Activated T-helper 1 cell treated with anti-CD3 and anti-CD28 coated beads, Interleukin-12 subunit alpha, Interleukin-12 subunit beta, Interleukin-2, Interleukin-4 antibody, amounts not matched to agents 30 ng/mL and 10 ng/mL and 1 ng/mL, durations not matched to agents 14 hours and 24 hours and 36 hours (primary cell): ENCODE measurements at regions of chr17 and their contacts with region 1.

Region 1: GRCh38 chr17:58417300-58418092 is at the start of gene RNF43:
- DNase-seq: peak; percentile 75
- H3K4me3 Mint-ChIP-seq: peak within 1 kb of the TSS; percentile 2
- H3K27ac Mint-ChIP-seq: peak within 1 kb of the TSS; percentile 47
- H3K4me1 Mint-ChIP-seq: peaks cover 28% of the 10 kb centered on the region
- H3K27me3 Mint-ChIP-seq: peaks cover 7% of the 10 kb centered on the region
- total RNA-seq, gene RNF43: 0.47 and 0.86 TPM in 2 replicates

Region 2: GRCh38 chr17:58317421-58318064 is 100.0 kb before region 1 on chr17:
- intact Hi-C with region 1: loop called (anchors 1 kb)
- DNase-seq: peak; percentile 55
- H3K4me3 Mint-ChIP-seq: no peak overlapping the region
- H3K27ac Mint-ChIP-seq: peak overlapping the region; percentile 87
- H3K4me1 Mint-ChIP-seq: peaks cover 28% of the 10 kb centered on the region
- H3K27me3 Mint-ChIP-seq: no peaks in the 10 kb centered on the region

Region 3: GRCh38 chr17:58329035-58329809 is 88.3 kb before region 1 on chr17:
- intact Hi-C with region 1: loop called (anchors 1 kb)
- DNase-seq: peak; percentile 81
- H3K4me3 Mint-ChIP-seq: peak overlapping the region; percentile 100
- H3K27ac Mint-ChIP-seq: peak overlapping the region; percentile 93
- H3K4me1 Mint-ChIP-seq: peaks cover 45% of the 10 kb centered on the region
- H3K27me3 Mint-ChIP-seq: peaks cover 2% of the 10 kb centered on the region

Region 4: DNA sequence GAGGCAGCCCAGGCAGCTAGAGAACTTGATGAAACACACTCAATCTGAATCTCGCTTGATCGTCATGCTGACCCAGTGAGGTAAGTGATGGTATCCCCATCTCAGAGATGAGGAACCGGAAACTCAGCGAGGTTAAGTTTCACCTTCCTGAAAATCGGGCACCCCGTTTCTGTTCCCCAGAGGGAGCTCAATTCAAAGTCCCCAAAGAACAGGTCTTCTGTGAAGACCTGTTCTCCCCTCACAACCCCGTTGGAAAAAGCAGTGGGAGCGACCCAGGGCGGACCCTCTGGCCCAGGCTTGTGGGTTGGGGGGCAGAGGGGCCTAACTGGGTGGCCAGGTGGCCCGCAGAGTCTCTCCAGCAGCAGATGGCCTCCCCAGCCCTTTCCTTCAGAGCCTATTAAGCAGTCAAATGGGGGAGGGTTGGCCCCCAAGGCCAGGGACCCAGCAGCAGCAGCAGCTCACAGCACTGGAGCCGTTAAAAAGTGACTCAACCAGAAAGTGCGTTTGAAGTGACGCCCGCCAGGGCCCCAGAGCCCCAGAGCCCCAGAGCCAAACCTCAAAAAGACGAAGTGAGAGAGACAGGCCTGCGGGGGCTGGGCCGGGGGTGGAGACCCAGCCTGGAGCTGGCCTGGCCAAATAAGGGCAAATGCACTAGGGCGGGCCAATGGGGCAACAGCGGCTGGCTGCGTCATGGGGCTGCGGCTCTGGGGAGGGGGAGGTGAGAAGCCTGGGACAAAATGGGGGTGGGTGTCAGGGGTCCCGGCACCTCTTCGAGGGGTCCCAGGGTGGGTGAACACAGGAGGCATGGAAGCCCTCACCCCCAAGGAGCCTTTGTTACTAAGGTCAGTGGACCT is 79.7 kb before region 1 on chr17:
- intact Hi-C with region 1: loop called (anchors 1 kb)
- DNase-seq: peak; percentile 92
- H3K4me3 Mint-ChIP-seq: peak overlapping the region; percentile 100
- H3K27ac Mint-ChIP-seq: peak overlapping the region; percentile 99
- H3K4me1 Mint-ChIP-seq: peaks cover 61% of the 10 kb centered on the region
- H3K27me3 Mint-ChIP-seq: peaks cover 2% of the 10 kb centered on the region

Region 5: GRCh38 chr17:58382108-58382871 is 35.2 kb before region 1 on chr17:
- intact Hi-C with region 1: loop called (anchors 1 kb)
- DNase-seq: no peak
- H3K4me3 Mint-ChIP-seq: peak overlapping the region; percentile 0
- H3K27ac Mint-ChIP-seq: peak overlapping the region; percentile 42
- H3K4me1 Mint-ChIP-seq: peaks cover 46% of the 10 kb centered on the region
- H3K27me3 Mint-ChIP-seq: no peaks in the 10 kb centered on the region

Region 6: GRCh38 chr17:58402047-58402446 is 15.4 kb before region 1 on chr17:
- intact Hi-C with region 1: loop called (anchors 1 kb)
- DNase-seq: no peak
- H3K4me3 Mint-ChIP-seq: no peak overlapping the region
- H3K27ac Mint-ChIP-seq: no peak overlapping the region
- H3K4me1 Mint-ChIP-seq: peaks cover 14% of the 10 kb centered on the region
- H3K27me3 Mint-ChIP-seq: peaks cover 4% of the 10 kb centered on the region

Region 7: GRCh38 chr17:58631523-58632323 is 214.2 kb after region 1 on chr17:
- intact Hi-C with region 1: no loop called
- DNase-seq: peak; percentile 96
- H3K4me3 Mint-ChIP-seq: no peak overlapping the region
- H3K27ac Mint-ChIP-seq: no peak overlapping the region
- H3K4me1 Mint-ChIP-seq: peaks cover 4% of the 10 kb centered on the region
- H3K27me3 Mint-ChIP-seq: no peaks in the 10 kb centered on the region